K562 (cell line): ENCODE measurements at regions of chr6 and their contacts with region 1.

Region 1: GRCh38 chr6:31862344-31863227 is at the start of gene NEU1:
- DNase-seq: peak; percentile 100
- ATAC-seq: peak; percentile 98
- H3K4me3 ChIP-seq: peak within 1 kb of the TSS; percentile 62
- H3K27ac ChIP-seq: peak within 1 kb of the TSS; percentile 73
- H3K4me1 ChIP-seq: peaks cover 13 to 43% of the 10 kb centered on the region in 2 experiments; a peak in 4 of 5 replicates
- H3K27me3 ChIP-seq: no peaks in the 10 kb centered on the region
- CTCF ChIP-seq: peak in 1 of 3 experiments; percentile 3; a peak in 1 of 6 replicates
- EP300 ChIP-seq: peak; percentile 38
- POLR2A ChIP-seq: peak; percentile 98
- RAD21 ChIP-seq: peak; percentile 19 to 32; a peak in 1 of 4 replicates
- polyA plus RNA-seq, gene NEU1: 14.8 to 20.6 TPM

Region 2: DNA sequence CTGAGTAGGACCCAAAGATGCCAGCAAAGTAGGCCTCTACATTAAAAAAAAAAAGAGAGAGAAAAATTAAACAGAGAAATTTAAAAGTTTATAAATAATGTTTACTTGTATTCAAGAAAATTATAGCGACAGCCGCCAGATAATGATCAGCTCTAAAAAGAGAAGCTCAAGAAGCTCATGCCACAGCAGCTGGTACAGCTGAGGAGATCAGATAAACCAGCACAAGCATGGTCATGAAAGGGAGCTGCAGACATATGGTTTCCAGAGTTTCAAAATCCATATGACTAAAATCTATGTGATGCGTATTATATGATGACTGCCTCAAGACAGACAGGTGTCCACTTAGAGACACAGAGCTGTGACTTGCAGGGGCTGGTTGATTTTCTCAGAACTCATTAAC is 577.1 kb before region 1 on chr6:
- CTCF ChIA-PET with region 1: no interaction called
- POLR2A ChIA-PET with region 1: no interaction called
- in situ Hi-C with region 1: no loop called
- intact Hi-C with region 1: no loop called
- DNase-seq: no peak
- ATAC-seq: no peak
- H3K4me3 ChIP-seq: no peak overlapping the region
- H3K27ac ChIP-seq: no peak overlapping the region
- H3K4me1 ChIP-seq: no peaks in the 10 kb centered on the region
- H3K27me3 ChIP-seq: peaks cover 2 to 23% of the 10 kb centered on the region in 2 experiments
- CTCF ChIP-seq: no peak
- EP300 ChIP-seq: no peak
- POLR2A ChIP-seq: no peak
- RAD21 ChIP-seq: no peak

Region 3: DNA sequence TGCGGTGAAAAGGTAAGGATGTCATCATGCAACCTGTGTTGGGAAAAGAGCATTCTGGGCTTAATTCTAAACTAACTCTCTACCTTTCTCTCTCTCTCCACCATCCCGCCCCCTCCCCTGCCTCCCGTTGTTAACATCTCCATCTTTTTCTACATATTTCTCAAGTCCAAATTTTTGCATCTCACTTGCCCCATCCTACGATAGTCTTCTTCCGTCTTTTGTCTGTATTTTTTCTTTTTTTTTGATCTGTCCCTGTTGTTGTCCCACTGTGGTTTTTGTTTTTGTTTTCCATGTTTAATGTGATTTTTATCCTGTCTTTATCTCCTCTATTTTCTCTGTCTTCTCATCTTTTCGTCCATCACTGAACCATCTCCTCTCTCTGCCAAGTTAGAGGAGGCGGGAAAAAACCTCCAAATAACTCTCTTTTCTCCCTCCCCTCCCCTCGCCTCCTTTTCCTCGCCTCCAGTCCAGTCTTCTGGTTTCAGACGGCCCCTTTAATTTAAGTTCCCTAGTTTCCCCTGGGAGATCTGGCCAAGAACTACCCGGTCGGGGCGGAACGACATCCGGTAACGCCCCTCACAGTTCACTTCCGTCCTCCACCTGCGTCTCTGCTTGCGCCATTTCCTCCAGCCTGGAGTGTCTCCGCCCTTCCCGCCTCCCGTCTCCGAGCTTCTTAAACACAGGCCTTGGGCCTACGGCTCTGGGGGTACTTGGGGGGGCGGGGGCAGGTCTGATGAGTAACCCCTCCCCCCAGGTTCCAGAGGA is 315.4 kb before region 1 on chr6 and contains the start of gene NFKBIL1:
- CTCF ChIA-PET with region 1: no interaction called
- POLR2A ChIA-PET with region 1: no interaction called
- in situ Hi-C with region 1: no loop called
- intact Hi-C with region 1: loop called (anchors 1 kb)
- DNase-seq: peak; percentile 92 to 100 (median 94)
- ATAC-seq: peak; percentile 93
- H3K4me3 ChIP-seq: peak within 1 kb of the TSS; percentile 52
- H3K27ac ChIP-seq: peak within 1 kb of the TSS; percentile 81
- H3K4me1 ChIP-seq: peaks cover 10 to 14% of the 10 kb centered on the region in 2 experiments; a peak in 4 of 5 replicates
- H3K27me3 ChIP-seq: no peaks in the 10 kb centered on the region
- CTCF ChIP-seq: no peak; a peak in 1 of 6 replicates
- EP300 ChIP-seq: peak; percentile 37; the same call in 1 of the 2 replicates
- POLR2A ChIP-seq: peak; percentile 71
- RAD21 ChIP-seq: peak in 1 of 2 experiments; percentile 14; a peak in 1 of 4 replicates
- polyA plus RNA-seq, gene NFKBIL1: 0.49 to 0.59 TPM

Region 4: GRCh38 chr6:31680840-31681671 is 181.5 kb before region 1 on chr6 and contains the start of gene LY6G5C:
- CTCF ChIA-PET with region 1: interaction called, 3 read pairs
- POLR2A ChIA-PET with region 1: no interaction called
- in situ Hi-C with region 1: no loop called
- intact Hi-C with region 1: loop called (anchors 2 kb)
- DNase-seq: peak; percentile 82 to 94 (median 88)
- ATAC-seq: peak; percentile 88
- H3K4me3 ChIP-seq: no peak within 1 kb of the TSS
- H3K27ac ChIP-seq: no peak within 1 kb of the TSS
- H3K4me1 ChIP-seq: peaks cover 10 to 24% of the 10 kb centered on the region in 2 experiments
- H3K27me3 ChIP-seq: no peaks in the 10 kb centered on the region
- CTCF ChIP-seq: peak; percentile 96 to 99 (median 99)
- EP300 ChIP-seq: peak; percentile 39; the same call in 1 of the 2 replicates
- POLR2A ChIP-seq: no peak
- RAD21 ChIP-seq: peak; percentile 99 to 100
- polyA plus RNA-seq, gene LY6G5C: 0.10 TPM in 1 of 2 experiments, not detected in the other

Region 5: DNA sequence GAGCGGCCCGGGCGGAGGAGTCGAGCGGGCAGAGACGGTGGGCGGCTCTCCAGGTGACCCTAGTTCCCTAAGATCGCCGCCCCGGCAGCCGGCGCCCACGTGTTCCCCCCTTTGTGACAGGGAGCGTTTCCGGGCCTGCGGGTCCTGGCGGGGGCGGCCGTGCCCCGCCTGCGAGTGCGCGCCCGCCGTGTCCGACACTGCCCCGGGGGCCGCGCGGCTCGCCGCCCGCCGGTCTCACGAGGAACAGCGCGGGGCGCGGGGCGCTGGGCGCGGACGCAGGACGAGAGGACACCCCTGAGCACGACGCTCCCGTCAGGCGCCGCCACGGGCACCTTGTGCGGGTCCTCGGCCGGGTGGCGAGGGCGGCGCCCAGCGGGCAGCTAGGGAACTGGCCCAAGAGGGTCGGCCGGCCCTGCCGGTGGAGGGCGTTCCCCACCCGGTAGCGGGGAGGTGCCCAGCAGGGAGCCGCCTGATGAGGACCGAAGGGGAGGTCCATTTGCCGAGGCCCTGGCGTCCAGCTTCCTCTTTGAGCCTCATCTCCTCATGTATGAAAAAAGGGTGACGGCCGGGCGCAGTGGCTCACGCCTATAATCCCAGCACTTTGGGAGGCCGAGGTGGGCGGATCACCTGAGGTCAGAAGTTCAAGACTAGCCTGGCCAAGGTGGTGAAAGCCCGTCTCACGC is 66.8 kb before region 1 on chr6 and contains the start of gene VARS1:
- CTCF ChIA-PET with region 1: interaction called, 5 read pairs
- POLR2A ChIA-PET with region 1: interaction called, 7 read pairs
- in situ Hi-C with region 1: no loop called
- intact Hi-C with region 1: loop called (anchors 1 kb)
- DNase-seq: peak; percentile 99 to 100 (median 100)
- ATAC-seq: peak; percentile 92
- H3K4me3 ChIP-seq: peak within 1 kb of the TSS; percentile 61
- H3K27ac ChIP-seq: peak within 1 kb of the TSS; percentile 97
- H3K4me1 ChIP-seq: peaks cover 17 to 44% of the 10 kb centered on the region in 2 experiments
- H3K27me3 ChIP-seq: no peaks in the 10 kb centered on the region
- CTCF ChIP-seq: peak; percentile 99 to 100 (median 100)
- EP300 ChIP-seq: peak; percentile 59; the same call in 1 of the 2 replicates
- POLR2A ChIP-seq: peak; percentile 38; the same call in 1 of the 2 replicates
- RAD21 ChIP-seq: peak; percentile 99 to 100
- polyA plus RNA-seq, gene VARS1: 2.9 to 10.4 TPM

Region 6: DNA sequence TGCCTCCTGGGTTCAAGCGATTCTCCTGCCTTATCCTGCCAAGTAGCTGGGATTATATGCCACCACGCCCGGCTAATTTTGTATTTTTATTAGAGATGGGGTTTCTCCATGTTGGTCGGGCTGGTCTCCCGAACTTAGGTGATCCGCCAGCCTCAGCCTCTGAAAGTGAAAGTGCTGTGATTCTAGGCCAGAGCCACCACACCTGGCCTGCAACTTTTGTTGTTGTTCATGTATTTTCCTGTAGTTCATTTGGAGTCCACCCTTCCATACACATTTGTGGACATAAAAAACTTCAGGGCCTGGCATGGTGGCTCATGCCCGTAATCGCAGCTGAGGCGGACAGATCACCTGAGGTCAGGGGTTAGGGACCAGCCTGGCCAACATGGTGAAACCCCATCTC is 20.5 kb before region 1 on chr6:
- CTCF ChIA-PET with region 1: interaction called, 3 read pairs
- POLR2A ChIA-PET with region 1: interaction called, 91 read pairs
- in situ Hi-C with region 1: no loop called
- intact Hi-C with region 1: no loop called
- DNase-seq: no peak
- ATAC-seq: peak; percentile 1; the same call in 2 of the 3 replicates
- H3K4me3 ChIP-seq: no peak overlapping the region
- H3K27ac ChIP-seq: no peak overlapping the region
- H3K4me1 ChIP-seq: peaks cover 15 to 27% of the 10 kb centered on the region in 2 experiments
- H3K27me3 ChIP-seq: no peaks in the 10 kb centered on the region
- CTCF ChIP-seq: no peak
- EP300 ChIP-seq: no peak
- POLR2A ChIP-seq: no peak
- RAD21 ChIP-seq: no peak

Region 7: DNA sequence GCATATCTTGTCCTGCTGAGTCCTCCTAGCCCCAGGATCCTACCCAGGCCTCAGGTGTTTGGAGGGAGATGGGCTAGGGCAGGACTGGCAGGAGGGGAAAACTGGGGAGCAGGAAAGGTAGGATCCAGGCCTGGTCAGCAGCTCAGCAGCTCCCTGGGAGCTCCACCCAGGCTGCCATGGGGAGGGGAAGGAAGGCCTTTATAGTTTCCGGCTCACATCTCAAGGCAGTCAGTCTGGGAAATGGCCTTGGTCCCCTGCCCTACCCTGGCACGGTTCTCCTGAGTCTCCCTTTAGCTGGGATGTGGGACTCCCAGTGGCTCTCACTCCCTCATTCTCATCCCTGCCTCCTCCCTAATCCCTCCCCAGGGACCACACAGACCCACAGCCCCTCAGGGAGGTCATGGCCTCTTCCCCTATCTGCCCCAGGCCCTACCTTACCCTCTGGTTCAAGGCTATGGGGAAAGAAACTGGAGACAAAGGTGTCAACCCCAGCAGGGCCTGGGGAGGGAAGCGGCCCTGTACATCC is 14.6 kb after region 1 on chr6:
- CTCF ChIA-PET with region 1: no interaction called
- POLR2A ChIA-PET with region 1: interaction called, 42 read pairs
- in situ Hi-C with region 1: no loop called
- intact Hi-C with region 1: no loop called
- DNase-seq: no peak
- ATAC-seq: peak; percentile 9; the same call in 2 of the 3 replicates
- H3K4me3 ChIP-seq: no peak overlapping the region
- H3K27ac ChIP-seq: no peak overlapping the region
- H3K4me1 ChIP-seq: peaks cover 0 to 26% of the 10 kb centered on the region in 2 experiments; a peak in 3 of 5 replicates
- H3K27me3 ChIP-seq: no peaks in the 10 kb centered on the region
- CTCF ChIP-seq: no peak
- EP300 ChIP-seq: no peak
- POLR2A ChIP-seq: no peak
- RAD21 ChIP-seq: no peak